Heart right ventricle (tissue), 16 donors: ENCODE measurements at regions of chr10 and their contacts with region 1.

Region 1: DNA sequence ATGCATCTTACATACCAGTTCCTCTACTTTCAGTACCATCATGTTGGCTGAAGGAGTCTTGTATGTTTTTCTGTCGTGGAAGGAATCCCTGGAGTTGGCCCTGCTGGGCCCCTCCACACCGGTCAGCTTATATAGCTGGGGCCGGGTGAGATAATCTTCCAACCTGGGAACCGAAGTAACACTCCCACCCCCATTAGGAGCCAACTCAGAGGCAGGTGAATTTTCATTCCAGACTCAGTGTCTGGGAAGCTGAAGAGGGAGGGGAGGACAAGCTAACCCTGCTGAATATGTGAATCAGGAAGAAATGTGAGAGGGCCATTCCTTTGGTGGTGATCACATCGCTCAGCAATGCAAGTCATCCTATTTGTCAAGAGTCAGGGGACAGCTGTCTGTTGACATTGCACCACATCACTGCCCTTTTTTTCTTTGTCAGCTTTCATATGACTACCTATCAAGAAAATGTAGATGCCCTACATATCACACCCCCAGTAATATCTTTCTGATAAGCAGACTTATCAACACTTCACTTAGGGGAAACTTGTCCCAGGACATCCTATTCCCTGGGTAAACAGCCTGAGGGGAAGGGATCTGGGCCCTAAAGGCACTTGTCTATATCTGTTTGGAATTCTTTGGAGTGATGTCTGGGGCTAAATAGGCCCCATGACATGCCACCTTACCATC is at the start of gene ANKRD1:
- DNase-seq: peak in 1 of 2 donors; percentile 73
- ATAC-seq: peak; percentile 61 to 91 (median 80)
- H3K4me3 ChIP-seq: peak within 1 kb of the TSS; percentile 35 to 61 (median 49)
- H3K27ac ChIP-seq: peak within 1 kb of the TSS; percentile 67 to 91 (median 86)
- H3K4me1 ChIP-seq: peaks cover 0 to 14% (median 3%) of the 10 kb centered on the region in 9 donors
- H3K27me3 ChIP-seq: no peaks in the 10 kb centered on the region
- CTCF ChIP-seq: no peak
- total RNA-seq, gene ANKRD1: 1,390 to 8,287 (median 4,440) TPM

Region 2: DNA sequence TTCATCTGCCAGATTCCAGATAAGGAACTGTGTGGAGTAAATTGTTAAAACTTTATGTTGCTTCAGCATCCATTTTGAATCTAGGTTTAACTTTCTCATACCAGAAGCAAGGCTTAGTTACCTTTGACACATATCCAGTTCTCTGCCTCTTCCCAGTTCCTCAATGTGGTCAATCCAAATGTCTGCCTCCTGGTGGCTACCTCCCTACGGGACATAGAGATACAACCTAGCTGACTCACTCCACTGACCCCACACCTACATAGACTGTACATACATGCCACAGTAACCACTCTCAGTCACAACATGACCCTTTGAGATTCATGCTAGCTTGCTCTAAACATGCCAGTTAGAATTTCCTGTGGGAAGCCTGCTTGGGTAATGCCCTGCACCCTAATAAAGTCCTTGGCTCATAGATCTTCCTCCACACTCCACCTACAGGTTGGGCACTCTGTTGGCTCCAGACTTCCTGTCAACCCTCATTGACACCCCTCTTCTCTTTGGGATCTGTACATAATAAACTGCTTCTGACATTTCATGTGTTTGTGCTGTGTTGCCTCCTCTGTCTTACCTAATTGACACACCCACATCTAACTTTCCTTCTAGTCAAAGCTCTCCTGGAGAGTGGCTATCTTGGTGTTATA is 341.4 kb before region 1 on chr10:
- intact Hi-C with region 1: no loop called
- DNase-seq: no peak
- ATAC-seq: no peak
- H3K4me3 ChIP-seq: no peak overlapping the region
- H3K27ac ChIP-seq: no peak overlapping the region
- H3K4me1 ChIP-seq: no peaks in the 10 kb centered on the region
- H3K27me3 ChIP-seq: no peaks in the 10 kb centered on the region
- CTCF ChIP-seq: peak in 1 of 9 donors; percentile 17

Region 3: GRCh38 chr10:90960355-90960814 is 39.3 kb after region 1 on chr10:
- intact Hi-C with region 1: loop called in 2 of 10 experiments (anchors 5 kb)
- DNase-seq: no peak
- ATAC-seq: peak in 5 of 8 donors; percentile 15 to 76 (median 41)
- H3K4me3 ChIP-seq: no peak overlapping the region
- H3K27ac ChIP-seq: peak overlapping the region in 1 of 10 donors; percentile 13
- H3K4me1 ChIP-seq: peaks cover 0 to 31% (median 20%) of the 10 kb centered on the region in 9 donors
- H3K27me3 ChIP-seq: no peaks in the 10 kb centered on the region
- CTCF ChIP-seq: no peak

Region 4: DNA sequence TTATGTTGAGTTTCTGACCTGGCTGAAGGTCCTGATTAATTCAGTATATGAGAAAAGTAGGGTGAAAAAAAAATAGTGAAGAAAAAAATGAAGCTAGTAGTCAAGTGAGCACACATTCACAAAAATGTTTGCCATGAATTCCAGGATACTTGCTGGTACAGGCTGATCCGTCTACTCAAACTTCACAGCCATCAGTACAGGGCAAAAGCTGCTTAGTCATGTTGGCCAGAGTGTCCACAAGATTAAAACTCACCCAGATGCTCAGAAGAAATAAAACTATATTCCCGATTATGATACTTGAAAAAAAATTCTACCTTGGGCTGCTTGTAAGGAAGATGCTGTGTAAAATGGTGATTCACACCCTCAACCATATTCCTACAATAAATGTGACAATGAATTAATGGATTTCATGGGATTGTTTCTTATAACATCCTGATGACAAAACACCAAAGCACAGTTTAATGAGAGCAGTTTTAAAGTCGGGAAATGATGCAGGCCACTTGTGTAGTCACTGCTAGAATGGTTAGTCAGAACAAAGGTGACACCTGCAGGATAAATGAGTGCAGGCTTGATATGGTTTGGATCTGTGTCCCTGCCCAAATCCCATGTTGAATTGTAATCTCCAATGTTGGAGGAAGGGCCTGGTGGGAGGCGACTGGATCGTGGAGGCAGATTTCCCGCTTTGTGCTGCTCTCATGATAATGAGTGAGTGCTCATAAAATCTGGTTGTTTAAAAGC is 49.0 kb after region 1 on chr10:
- intact Hi-C with region 1: loop called in 2 of 10 experiments (anchors 1 to 5 kb)
- DNase-seq: no peak
- ATAC-seq: peak in 7 of 8 donors; percentile 35 to 80 (median 59)
- H3K4me3 ChIP-seq: peak overlapping the region in 2 of 10 donors; percentile 25 to 44
- H3K27ac ChIP-seq: peak overlapping the region in 8 of 10 donors; percentile 21 to 77 (median 61)
- H3K4me1 ChIP-seq: peaks cover 5 to 44% (median 18%) of the 10 kb centered on the region in 9 donors
- H3K27me3 ChIP-seq: no peaks in the 10 kb centered on the region
- CTCF ChIP-seq: peak in 4 of 9 donors; percentile 18 to 46 (median 37)

Region 5: DNA sequence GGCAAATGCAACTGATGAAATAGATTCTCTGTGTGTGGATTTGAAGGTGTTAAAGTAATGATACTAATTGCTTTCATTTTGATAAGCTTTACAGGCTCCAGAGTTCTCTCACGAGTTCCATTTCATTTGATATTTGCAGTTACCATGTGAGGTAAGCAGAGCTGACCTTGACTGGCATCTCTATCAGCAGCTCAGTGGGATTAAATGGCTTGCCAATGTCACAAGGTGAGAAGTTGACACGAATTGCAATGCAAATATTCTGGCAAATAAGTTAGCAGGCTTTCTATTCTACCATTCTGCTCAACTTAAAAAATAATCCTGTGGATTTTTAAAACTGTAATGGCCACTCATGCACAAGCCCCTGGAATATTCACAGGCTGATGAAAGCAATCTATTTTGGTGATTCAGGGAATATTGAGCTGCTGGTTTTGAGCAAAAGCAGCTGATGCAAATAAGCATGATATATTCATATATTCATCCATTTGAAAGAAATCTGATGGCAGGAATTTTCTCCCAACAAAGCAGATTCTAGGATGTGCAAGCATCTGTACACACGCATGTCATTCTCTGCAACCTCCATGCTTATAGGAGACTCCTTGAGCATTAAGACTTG is 64.3 kb after region 1 on chr10:
- intact Hi-C with region 1: loop called in 2 of 10 experiments (anchors 5 kb)
- DNase-seq: no peak
- ATAC-seq: peak in 6 of 8 donors; percentile 64 to 78 (median 71)
- H3K4me3 ChIP-seq: no peak overlapping the region
- H3K27ac ChIP-seq: peak overlapping the region in 8 of 10 donors; percentile 44 to 84 (median 80)
- H3K4me1 ChIP-seq: peaks cover 0 to 52% (median 18%) of the 10 kb centered on the region in 9 donors
- H3K27me3 ChIP-seq: no peaks in the 10 kb centered on the region
- CTCF ChIP-seq: no peak